ENCODE measurements at regions of chr10 and their contacts with region 1.

Region 1: GRCh38 chr10:116836902-116837523 is 12.3 kb upstream of the ENO4 start:
- DNase-seq: no peak
- ATAC-seq: no peak
- H3K4me3 ChIP-seq: no peak overlapping the region
- H3K27ac ChIP-seq: no peak overlapping the region
- H3K4me1 ChIP-seq: no peaks in the 10 kb centered on the region; the same call in 1 of the 2 replicates
- H3K27me3 ChIP-seq: no peaks in the 10 kb centered on the region
- CTCF ChIP-seq: peak; percentile 69

Region 2: DNA sequence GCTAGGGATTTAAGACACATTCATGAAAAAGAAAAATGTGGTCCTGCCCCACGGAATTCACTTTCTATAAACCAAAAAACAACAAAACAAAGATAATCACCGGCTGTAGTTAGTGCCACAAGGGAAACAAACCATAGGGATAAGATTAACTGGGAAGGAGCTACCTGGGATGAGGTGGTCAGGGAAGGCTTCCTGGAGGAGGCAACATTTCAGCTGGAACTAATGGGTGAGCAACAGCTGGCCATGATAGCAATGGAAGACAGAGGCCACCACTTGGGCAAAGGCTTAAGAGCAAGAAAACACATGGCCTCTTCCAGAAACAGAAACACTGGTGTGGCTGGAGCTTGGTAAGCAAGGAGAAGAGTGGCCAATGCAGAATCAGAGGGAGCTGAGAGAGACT is 26.1 kb before region 1 on chr10:
- CTCF ChIA-PET with region 1: interaction called, 14 read pairs
- POLR2A ChIA-PET with region 1: no interaction called
- in situ Hi-C with region 1: no loop called
- intact Hi-C with region 1: no loop called
- DNase-seq: no peak
- ATAC-seq: no peak
- H3K4me3 ChIP-seq: no peak overlapping the region
- H3K27ac ChIP-seq: no peak overlapping the region
- H3K4me1 ChIP-seq: no peaks in the 10 kb centered on the region
- H3K27me3 ChIP-seq: no peaks in the 10 kb centered on the region; the same call in 1 of the 2 replicates
- CTCF ChIP-seq: no peak